ENCODE measurements at regions of chr5 and their contacts with region 1.

Region 1: DNA sequence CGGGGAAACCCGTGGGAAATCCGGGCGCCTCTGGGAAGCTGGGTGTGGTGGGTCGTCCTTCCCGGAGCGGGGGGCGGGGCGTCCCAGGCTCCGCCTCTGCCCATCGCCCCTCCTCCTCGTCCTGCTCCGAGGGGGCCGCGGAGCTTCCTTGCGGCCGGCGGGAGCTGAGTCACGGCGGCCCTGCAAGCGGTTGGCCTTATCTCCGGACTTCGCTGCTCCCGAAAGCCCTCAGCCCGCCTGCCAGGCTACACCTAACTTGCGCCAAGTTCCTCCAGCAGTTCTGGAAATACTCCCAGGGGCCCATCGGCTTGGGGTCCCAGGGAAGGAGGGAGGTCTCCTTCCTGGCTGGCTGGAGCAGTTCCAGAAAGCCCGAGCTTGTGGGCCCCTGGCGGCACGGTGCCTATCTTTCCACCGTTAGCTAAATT is 54.1 kb upstream of the CDKN2AIPNL start:
- DNase-seq: peak; percentile 73
- ATAC-seq: peak; percentile 83
- H3K4me3 ChIP-seq: peak overlapping the region; percentile 81 to 83 (median 82)
- H3K27ac ChIP-seq: peak overlapping the region; percentile 95
- H3K4me1 ChIP-seq: peaks cover 27% of the 10 kb centered on the region
- H3K27me3 ChIP-seq: peaks cover 0 to 3% of the 10 kb centered on the region in 2 experiments; a peak in 3 of 5 replicates
- CTCF ChIP-seq: no peak
- EP300 ChIP-seq: no peak; a peak in 1 of 4 replicates
- POLR2A ChIP-seq: peak; percentile 64 to 86
- RAD21 ChIP-seq: 0 out of 2 replicates have a peak, but pooled peaks have one; percentile 12

Region 2: DNA sequence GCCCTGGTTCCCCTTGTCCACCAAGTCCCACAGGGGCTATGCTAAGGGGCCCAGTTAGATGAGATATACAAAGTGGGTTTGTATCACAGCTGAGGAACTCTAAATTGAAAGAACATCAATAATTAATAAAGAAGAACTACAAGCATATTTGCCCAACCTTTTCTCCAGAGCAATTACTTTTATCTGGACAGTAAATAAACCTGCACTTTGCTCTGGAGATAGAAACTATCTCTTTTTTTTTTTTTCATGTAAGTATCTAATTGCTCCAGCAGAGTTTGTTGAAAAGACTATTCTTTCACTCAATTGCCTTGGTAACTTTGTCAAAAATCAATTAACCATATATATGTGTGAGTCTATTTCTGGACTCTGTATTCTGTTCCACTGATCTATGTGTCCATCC is 48.1 kb before region 1 on chr5:
- CTCF ChIA-PET with region 1: no interaction called
- POLR2A ChIA-PET with region 1: interaction called, 86 read pairs
- in situ Hi-C with region 1: no loop called
- intact Hi-C with region 1: loop called (anchors 5 kb)
- DNase-seq: no peak
- ATAC-seq: no peak
- H3K4me3 ChIP-seq: no peak overlapping the region; a peak in 1 of 6 replicates
- H3K27ac ChIP-seq: peak overlapping the region; percentile 96
- H3K4me1 ChIP-seq: peaks cover 65% of the 10 kb centered on the region
- H3K27me3 ChIP-seq: no peaks in the 10 kb centered on the region
- CTCF ChIP-seq: no peak
- EP300 ChIP-seq: peak in 1 of 2 experiments; percentile 33; a peak in 1 of 4 replicates
- POLR2A ChIP-seq: no peak
- RAD21 ChIP-seq: no peak

Region 3: DNA sequence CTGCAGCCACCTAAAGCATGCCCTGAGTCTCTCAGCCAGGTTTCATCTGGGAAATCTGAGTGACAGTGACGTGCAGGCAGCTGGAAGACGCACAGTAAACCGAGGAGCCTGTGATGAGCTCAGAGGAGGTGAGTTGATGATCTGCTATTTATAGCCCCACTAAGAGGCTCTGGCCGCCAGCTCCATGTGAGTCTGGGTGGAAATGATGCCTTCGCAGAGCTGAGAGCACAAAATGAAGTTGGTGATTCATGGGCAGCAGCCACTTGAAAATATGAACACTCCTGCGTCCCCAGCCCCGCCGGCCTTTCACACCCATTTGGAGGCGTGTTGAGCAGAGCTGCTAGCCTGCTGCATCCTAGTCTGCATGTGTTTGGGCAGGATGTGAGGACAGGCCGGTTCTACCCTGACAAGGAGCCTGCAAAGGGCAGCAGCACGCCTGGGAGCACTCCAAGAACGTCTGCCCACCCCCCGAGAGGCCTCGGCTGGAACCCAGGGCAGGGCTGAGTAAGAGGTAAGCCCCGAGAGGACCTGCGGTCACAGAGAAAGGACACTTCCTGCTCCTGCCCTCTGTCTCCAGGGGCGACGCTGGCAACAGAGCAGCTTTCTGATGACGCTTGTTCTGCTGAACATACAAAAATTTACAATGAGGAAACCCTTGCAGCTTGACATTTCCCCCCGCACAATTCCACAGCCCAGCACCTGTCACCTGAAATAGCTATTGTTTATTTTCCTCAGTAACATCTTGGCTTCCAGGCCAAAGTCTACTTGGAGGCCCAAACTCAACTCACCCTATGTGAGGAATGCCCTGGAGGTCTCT is 29.1 kb before region 1 on chr5:
- CTCF ChIA-PET with region 1: no interaction called
- POLR2A ChIA-PET with region 1: interaction called, 29 read pairs
- in situ Hi-C with region 1: no loop called
- intact Hi-C with region 1: no loop called
- DNase-seq: peak; percentile 64
- ATAC-seq: peak; percentile 79
- H3K4me3 ChIP-seq: peak overlapping the region; percentile 45 to 72 (median 46)
- H3K27ac ChIP-seq: peak overlapping the region; percentile 47
- H3K4me1 ChIP-seq: peaks cover 72% of the 10 kb centered on the region
- H3K27me3 ChIP-seq: peaks cover 2 to 11% of the 10 kb centered on the region in 2 experiments; a peak in 4 of 5 replicates
- CTCF ChIP-seq: no peak
- EP300 ChIP-seq: no peak
- POLR2A ChIP-seq: no peak
- RAD21 ChIP-seq: no peak

Region 4: GRCh38 chr5:134451936-134452505 is 13.8 kb before region 1 on chr5:
- CTCF ChIA-PET with region 1: no interaction called
- POLR2A ChIA-PET with region 1: interaction called, 10 read pairs
- in situ Hi-C with region 1: no loop called
- intact Hi-C with region 1: no loop called
- DNase-seq: no peak
- ATAC-seq: peak; percentile 14; the same call in 1 of the 3 replicates
- H3K4me3 ChIP-seq: no peak overlapping the region
- H3K27ac ChIP-seq: no peak overlapping the region
- H3K4me1 ChIP-seq: peaks cover 29% of the 10 kb centered on the region
- H3K27me3 ChIP-seq: peaks cover 1 to 6% of the 10 kb centered on the region in 2 experiments; a peak in 1 of 5 replicates
- CTCF ChIP-seq: no peak
- EP300 ChIP-seq: no peak
- POLR2A ChIP-seq: no peak
- RAD21 ChIP-seq: no peak

Region 5: GRCh38 chr5:134503088-134503946 is 37.5 kb after region 1 on chr5:
- CTCF ChIA-PET with region 1: no interaction called
- POLR2A ChIA-PET with region 1: interaction called, 181 read pairs
- in situ Hi-C with region 1: no loop called
- intact Hi-C with region 1: loop called (anchors 1 kb)
- DNase-seq: peak; percentile 93
- ATAC-seq: peak; percentile 72
- H3K4me3 ChIP-seq: peak overlapping the region; percentile 27 to 62 (median 41)
- H3K27ac ChIP-seq: peak overlapping the region; percentile 89
- H3K4me1 ChIP-seq: peaks cover 71% of the 10 kb centered on the region
- H3K27me3 ChIP-seq: no peaks in the 10 kb centered on the region; a peak in 1 of 5 replicates
- CTCF ChIP-seq: peak; percentile 34
- EP300 ChIP-seq: no peak; a peak in 1 of 4 replicates
- POLR2A ChIP-seq: peak in 1 of 2 experiments; percentile 78; a peak in 2 of 4 replicates
- RAD21 ChIP-seq: peak; percentile 30; the same call in 1 of the 2 replicates

Region 6: GRCh38 chr5:134511788-134512650 is 46.2 kb after region 1 on chr5:
- CTCF ChIA-PET with region 1: no interaction called
- POLR2A ChIA-PET with region 1: interaction called, 181 read pairs
- in situ Hi-C with region 1: loop called (anchors 5 kb)
- intact Hi-C with region 1: no loop called
- DNase-seq: peak; percentile 74
- ATAC-seq: peak; percentile 84
- H3K4me3 ChIP-seq: peak overlapping the region; percentile 12 to 60 (median 24); a peak in 5 of 6 replicates
- H3K27ac ChIP-seq: peak overlapping the region; percentile 71
- H3K4me1 ChIP-seq: peaks cover 73% of the 10 kb centered on the region
- H3K27me3 ChIP-seq: no peaks in the 10 kb centered on the region
- CTCF ChIP-seq: peak; percentile 77
- EP300 ChIP-seq: peak in 1 of 2 experiments; percentile 40; a peak in 1 of 4 replicates
- POLR2A ChIP-seq: peak in 1 of 2 experiments; percentile 61; a peak in 1 of 4 replicates
- RAD21 ChIP-seq: peak; percentile 57; the same call in 1 of the 2 replicates

Region 7: DNA sequence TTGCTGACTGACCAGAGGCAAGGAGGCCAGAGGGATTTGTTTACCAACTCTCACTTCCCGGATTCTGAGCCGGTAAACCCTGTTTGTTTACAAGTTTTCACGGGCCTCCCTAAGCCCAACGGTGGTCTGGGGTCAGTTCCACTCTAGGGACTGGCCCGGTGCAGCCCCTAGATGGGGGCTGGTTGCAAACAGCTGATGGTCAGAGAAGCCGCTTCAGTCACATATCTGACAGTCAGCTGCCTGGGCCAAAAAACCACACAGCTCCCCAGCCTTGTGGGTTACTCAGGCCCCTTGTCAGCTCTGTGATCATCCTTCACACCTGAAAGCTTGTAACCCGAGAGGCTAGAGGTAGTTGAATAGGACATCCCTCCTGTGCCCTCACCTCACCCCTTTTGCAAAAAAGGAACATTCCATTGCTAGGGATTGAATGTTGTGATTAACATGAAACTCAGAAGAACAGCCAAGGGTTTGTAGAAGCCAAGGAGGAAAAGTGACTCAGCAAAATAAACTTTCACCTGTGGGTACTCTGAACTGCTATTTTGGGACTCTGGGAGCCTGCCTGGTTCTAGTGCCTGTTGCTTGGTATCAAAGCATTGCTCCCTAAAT is 126.4 kb after region 1 on chr5:
- CTCF ChIA-PET with region 1: no interaction called
- POLR2A ChIA-PET with region 1: no interaction called
- in situ Hi-C with region 1: no loop called
- intact Hi-C with region 1: no loop called
- DNase-seq: no peak
- ATAC-seq: peak; percentile 16
- H3K4me3 ChIP-seq: peak overlapping the region; percentile 21 to 56 (median 26); a peak in 3 of 6 replicates
- H3K27ac ChIP-seq: no peak overlapping the region
- H3K4me1 ChIP-seq: peaks cover 69% of the 10 kb centered on the region
- H3K27me3 ChIP-seq: no peaks in the 10 kb centered on the region
- CTCF ChIP-seq: no peak
- EP300 ChIP-seq: no peak
- POLR2A ChIP-seq: no peak
- RAD21 ChIP-seq: no peak

Measured in HepG2 (cell line).